BJ (cell line): ENCODE measurements at regions of chr1 and their contacts with region 1.

Region 1: GRCh38 chr1:229258031-229258756 is 12.7 kb upstream of the RAB4A start:
- DNase-seq: no peak
- H3K4me3 ChIP-seq: no peak overlapping the region
- H3K27me3 ChIP-seq: no peaks in the 10 kb centered on the region
- CTCF ChIP-seq: peak; percentile 71

Region 2: DNA sequence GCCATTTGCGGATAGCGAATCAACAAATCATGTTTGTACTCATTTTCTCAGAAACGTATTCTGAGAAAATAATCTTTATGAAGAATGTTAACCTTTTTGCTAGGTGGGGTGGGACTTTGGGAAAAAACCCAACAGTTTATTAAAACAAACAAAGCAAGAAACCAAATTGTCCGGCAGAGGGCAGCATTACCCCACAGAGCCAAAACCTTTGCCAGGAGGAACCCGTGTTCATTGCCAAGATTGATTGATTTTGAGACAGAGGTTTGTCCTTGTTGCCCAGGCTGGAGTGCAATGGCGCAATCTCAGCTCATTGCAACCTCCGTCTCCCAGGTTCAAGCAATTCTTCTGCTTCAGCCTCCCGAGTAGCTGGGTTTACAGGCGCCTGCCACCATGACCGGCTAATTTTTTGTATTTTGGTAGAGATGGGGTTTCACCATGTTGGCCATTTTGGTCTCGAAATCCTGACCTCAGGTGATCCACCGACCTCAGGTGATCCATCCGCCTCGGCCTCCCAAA is 593.7 kb before region 1 on chr1:
- CTCF ChIA-PET with region 1: interaction called, 15 read pairs
- POLR2A ChIA-PET with region 1: no interaction called
- DNase-seq: no peak
- H3K4me3 ChIP-seq: no peak overlapping the region
- H3K27me3 ChIP-seq: no peaks in the 10 kb centered on the region
- CTCF ChIP-seq: peak; percentile 74

Region 3: DNA sequence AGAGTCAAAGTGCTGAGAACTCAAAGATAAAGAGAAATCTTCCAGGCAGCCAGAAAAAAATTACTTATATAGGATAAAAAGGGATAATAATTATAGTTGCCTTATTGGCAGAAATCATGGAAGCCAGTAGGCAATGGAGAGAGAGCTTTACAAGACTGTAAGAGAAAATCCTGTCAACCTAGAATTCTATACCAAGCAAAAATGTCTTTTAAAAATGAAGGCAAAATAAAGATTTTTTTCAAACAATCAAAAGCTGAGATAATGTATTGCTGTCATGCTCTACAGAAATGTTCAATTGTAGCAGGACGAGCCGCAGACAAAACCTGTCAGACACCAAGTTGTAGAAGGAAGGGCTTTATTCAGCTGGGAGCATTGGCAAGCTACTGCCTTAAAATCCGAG is 14.1 kb before region 1 on chr1:
- CTCF ChIA-PET with region 1: interaction called, 16 read pairs
- POLR2A ChIA-PET with region 1: no interaction called
- DNase-seq: no peak
- H3K4me3 ChIP-seq: no peak overlapping the region
- H3K27me3 ChIP-seq: no peaks in the 10 kb centered on the region; the same call in none of the 2 replicates
- CTCF ChIP-seq: no peak

Region 4: GRCh38 chr1:229270547-229271447 is 12.6 kb after region 1 on chr1 and contains the start of gene RAB4A:
- CTCF ChIA-PET with region 1: interaction called, 15 read pairs
- POLR2A ChIA-PET with region 1: no interaction called
- DNase-seq: peak; percentile 34
- H3K4me3 ChIP-seq: peak within 1 kb of the TSS; percentile 56
- H3K27me3 ChIP-seq: no peaks in the 10 kb centered on the region
- CTCF ChIP-seq: no peak
- polyA plus RNA-seq, gene RAB4A: 24.8 and 26.6 TPM in 2 replicates

Region 5: DNA sequence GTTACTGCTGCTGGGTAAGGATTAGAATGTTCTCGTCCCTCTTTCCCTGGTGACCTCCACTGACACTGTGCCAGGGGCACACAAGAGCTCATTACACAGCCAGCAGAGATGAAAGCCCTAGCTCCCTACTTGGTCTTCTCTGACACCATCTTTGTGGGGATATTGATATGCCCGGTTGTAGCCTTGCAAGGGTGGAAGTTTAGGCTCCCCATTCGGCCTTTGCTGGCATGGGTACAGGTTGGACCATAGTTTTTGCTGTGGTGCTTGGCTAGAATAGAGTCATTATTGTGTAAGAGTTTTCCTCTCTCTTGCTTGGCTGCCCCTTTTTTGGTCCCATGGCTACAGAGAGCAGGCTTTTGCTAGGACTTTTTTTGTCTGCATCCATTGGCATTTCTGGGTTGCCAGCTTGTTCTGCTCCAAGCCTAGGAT is 25.0 kb after region 1 on chr1:
- CTCF ChIA-PET with region 1: no interaction called
- POLR2A ChIA-PET with region 1: no interaction called
- DNase-seq: no peak
- H3K4me3 ChIP-seq: no peak overlapping the region
- H3K27me3 ChIP-seq: no peaks in the 10 kb centered on the region
- CTCF ChIP-seq: no peak

Region 6: DNA sequence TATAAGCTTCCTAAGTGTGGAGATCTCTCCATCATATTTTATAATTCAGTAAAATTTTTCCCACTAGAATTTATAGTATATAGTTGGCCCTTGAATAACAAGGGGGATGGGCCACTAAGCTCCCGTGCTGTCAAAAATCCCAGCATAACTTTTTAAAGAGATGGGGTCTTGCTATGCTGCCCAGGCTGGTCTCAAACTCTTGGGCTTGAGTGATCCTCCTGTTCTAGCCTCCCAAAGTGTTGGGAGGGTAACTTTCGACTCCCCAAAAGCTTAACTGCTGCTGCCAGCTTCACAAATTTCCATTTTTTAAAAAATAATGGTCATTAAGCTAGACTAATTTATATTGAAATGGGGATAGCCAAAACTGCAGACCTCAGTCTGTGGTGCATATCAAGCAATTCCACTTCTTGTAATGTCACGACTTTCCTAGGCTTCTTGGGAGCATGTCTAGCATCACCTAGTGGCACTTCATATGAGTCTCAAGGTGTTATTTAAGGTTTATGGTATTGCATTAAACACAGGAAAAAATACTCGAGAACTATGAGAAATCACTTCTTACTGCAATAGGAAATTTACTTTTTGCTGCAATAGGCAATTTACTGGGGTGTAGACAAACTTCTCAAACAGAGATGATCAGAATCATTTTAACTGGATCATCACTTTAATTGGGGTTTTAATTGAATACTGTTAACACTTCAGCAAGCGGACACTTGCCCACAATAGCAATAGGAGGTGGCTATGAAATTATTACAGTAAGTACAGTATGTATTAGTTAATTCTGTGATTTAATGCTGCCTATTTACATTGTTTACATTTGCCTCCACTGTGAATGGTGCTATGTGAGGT is 195.0 kb after region 1 on chr1:
- CTCF ChIA-PET with region 1: interaction called, 13 read pairs
- POLR2A ChIA-PET with region 1: no interaction called
- DNase-seq: no peak
- H3K4me3 ChIP-seq: no peak overlapping the region
- H3K27me3 ChIP-seq: no peaks in the 10 kb centered on the region
- CTCF ChIP-seq: peak; percentile 54

Region 7: DNA sequence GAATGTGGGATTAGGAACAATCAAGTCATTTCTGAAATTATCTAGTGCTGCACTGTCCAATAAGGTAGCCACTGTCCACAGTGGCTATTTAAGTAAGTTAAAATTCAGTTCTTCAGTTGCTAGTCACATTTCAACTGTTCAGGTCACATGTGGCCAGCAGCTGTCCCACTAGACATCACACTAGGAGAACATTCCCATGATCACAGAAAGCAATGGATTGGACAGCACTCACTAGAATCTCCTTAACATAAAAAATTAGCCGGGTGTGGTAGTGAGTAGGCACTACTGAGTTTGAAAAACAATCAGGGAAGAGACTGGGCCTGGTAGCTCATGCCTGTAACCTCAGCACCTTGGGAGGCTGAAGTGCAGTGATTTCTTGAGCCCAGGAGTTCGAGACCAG is 216.3 kb after region 1 on chr1:
- CTCF ChIA-PET with region 1: interaction called, 111 read pairs
- POLR2A ChIA-PET with region 1: no interaction called
- DNase-seq: no peak
- H3K4me3 ChIP-seq: no peak overlapping the region
- H3K27me3 ChIP-seq: no peaks in the 10 kb centered on the region
- CTCF ChIP-seq: no peak

Region 8: DNA sequence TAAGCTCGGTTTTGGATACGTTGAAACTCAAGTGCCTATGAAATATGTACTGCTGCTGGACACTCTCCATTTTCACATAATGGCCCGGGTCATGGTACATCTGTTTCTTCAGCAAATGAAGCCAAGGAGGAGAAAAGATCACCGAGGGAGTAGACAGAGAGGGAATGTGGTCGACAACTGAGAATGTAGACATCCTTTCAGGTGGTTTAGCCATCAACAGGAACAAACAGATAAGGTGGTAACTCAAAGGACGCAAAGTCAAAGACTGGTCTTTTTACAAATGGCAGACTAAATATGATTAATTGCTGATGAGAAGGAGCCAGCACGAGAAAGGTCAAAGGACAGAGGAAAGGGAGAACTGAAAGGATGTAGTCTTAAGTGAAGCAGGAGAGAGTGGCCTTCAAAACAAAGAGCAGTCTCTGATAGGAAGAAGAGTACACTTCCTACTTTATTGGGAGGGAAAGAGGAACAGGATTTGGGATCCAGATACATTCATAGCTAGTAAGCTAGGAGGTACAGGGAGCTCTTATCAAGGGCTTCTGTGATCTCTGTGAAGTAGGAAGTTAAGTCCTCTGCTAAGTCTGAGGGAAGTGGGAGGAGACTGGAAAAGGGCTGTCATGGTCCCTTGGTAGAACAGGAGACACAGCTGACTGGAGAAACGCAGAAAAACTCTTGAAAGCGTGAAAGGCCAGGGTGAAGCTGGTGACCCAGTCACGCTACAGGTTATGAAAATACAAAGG is 221.6 kb after region 1 on chr1:
- CTCF ChIA-PET with region 1: interaction called, 111 read pairs
- POLR2A ChIA-PET with region 1: no interaction called
- DNase-seq: no peak
- H3K4me3 ChIP-seq: no peak overlapping the region
- H3K27me3 ChIP-seq: no peaks in the 10 kb centered on the region
- CTCF ChIP-seq: no peak